WTC11 (cell line): ENCODE measurements at regions of chr12 and their contacts with region 1.

Region 1: GRCh38 chr12:109428037-109428629 is 49.0 kb downstream of the KCTD10 start:
- DNase-seq: peak; percentile 86
- ATAC-seq: peak; percentile 91
- H3K4me3 Mint-ChIP-seq: no peak overlapping the region
- H3K27ac Mint-ChIP-seq: no peak overlapping the region
- H3K4me1 Mint-ChIP-seq: peaks cover 9% of the 10 kb centered on the region
- H3K27me3 Mint-ChIP-seq: 0 out of 2 replicates have a peak, but pooled peaks cover 3% of the 10 kb centered on the region
- CTCF ChIP-seq: peak; percentile 94

Region 2: GRCh38 chr12:109264095-109264942 is 163.8 kb before region 1 on chr12:
- CTCF ChIA-PET with region 1: interaction called, 10 read pairs
- POLR2A ChIA-PET with region 1: no interaction called
- DNase-seq: peak; percentile 95
- ATAC-seq: peak; percentile 90
- H3K4me3 Mint-ChIP-seq: no peak overlapping the region
- H3K27ac Mint-ChIP-seq: no peak overlapping the region
- H3K4me1 Mint-ChIP-seq: peaks cover 10% of the 10 kb centered on the region
- H3K27me3 Mint-ChIP-seq: no peaks in the 10 kb centered on the region
- CTCF ChIP-seq: peak; percentile 58; the same call in 1 of the 2 replicates

Region 3: DNA sequence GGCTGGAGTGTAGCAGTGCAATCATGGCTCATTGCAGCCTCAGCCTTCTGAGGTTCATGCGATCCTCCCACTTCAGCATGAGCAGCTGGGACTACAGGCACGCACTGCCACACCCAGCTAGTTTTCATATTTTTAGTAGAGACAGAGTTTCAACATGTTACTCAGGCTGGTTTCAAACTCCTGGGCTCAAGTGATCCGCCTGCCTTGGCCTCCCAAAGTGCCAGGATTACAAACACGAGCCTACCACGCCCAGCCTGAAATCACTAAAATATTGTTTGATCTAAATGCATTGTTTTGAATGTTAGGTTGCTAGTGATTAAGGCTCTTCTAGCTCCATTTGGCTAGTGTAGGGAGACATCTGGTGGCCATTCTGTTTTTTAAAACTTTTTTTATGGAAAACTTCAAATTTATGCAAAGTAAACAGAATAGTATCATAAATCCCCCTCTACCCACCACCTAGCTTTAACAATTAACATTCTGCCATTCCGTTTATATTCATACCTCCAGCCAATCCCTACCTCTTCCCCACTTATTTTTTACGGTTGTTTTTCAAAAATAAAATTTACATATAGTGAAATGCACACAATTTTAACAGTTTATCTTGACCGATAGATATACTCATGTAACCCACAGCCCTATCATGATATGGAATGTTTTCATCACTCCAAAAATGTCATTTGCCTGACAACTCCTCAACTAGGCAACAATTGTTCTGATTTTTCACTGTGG is 42.6 kb before region 1 on chr12:
- CTCF ChIA-PET with region 1: interaction called, 14 read pairs
- POLR2A ChIA-PET with region 1: no interaction called
- DNase-seq: no peak
- ATAC-seq: no peak
- H3K4me3 Mint-ChIP-seq: no peak overlapping the region
- H3K27ac Mint-ChIP-seq: no peak overlapping the region
- H3K4me1 Mint-ChIP-seq: no peaks in the 10 kb centered on the region
- H3K27me3 Mint-ChIP-seq: peaks cover 9% of the 10 kb centered on the region
- CTCF ChIP-seq: peak; percentile 17; the same call in 1 of the 2 replicates

Region 4: GRCh38 chr12:109393437-109394345 is 34.4 kb before region 1 on chr12:
- CTCF ChIA-PET with region 1: interaction called, 27 read pairs
- POLR2A ChIA-PET with region 1: no interaction called
- DNase-seq: peak; percentile 45
- ATAC-seq: peak; percentile 85
- H3K4me3 Mint-ChIP-seq: no peak overlapping the region
- H3K27ac Mint-ChIP-seq: no peak overlapping the region
- H3K4me1 Mint-ChIP-seq: no peaks in the 10 kb centered on the region
- H3K27me3 Mint-ChIP-seq: peaks cover 2% of the 10 kb centered on the region; the same call in 1 of the 2 replicates
- CTCF ChIP-seq: peak; percentile 64

Region 5: DNA sequence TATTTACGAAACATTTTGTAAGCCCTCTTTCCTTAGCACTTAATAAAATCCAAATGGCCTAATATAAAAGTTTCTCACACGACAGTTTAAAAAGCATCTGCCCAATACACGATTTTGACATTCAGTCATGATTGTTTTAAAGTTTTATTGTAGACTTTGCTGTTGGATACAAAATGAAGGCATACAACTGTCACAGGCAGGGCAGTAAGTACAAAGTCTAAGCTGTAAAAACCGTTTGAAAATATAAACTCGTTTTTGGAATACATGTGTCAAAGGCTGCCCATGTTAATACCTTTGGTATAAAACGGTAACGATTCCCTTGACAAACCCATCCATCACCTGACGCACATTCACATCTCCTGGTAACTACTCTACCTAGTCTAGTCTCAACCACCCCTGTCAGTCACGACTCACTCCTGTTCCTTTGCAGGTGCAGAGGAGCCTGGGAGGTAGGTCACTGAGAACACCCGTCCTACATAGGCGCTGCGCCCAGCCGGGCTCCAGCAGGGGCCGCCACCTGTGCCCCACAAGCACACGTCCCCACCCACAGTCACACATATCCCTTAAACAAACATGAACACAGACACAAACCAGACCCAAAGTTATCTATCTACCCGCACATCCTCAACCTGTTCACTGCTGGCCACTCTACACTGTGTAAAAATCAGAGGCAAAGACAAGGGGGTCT is 21.9 kb after region 1 on chr12:
- CTCF ChIA-PET with region 1: interaction called, 20 read pairs
- POLR2A ChIA-PET with region 1: no interaction called
- DNase-seq: no peak
- ATAC-seq: peak; percentile 72; the same call in 1 of the 2 replicates
- H3K4me3 Mint-ChIP-seq: no peak overlapping the region
- H3K27ac Mint-ChIP-seq: peak overlapping the region; percentile 59
- H3K4me1 Mint-ChIP-seq: no peaks in the 10 kb centered on the region
- H3K27me3 Mint-ChIP-seq: no peaks in the 10 kb centered on the region
- CTCF ChIP-seq: no peak

Region 6: DNA sequence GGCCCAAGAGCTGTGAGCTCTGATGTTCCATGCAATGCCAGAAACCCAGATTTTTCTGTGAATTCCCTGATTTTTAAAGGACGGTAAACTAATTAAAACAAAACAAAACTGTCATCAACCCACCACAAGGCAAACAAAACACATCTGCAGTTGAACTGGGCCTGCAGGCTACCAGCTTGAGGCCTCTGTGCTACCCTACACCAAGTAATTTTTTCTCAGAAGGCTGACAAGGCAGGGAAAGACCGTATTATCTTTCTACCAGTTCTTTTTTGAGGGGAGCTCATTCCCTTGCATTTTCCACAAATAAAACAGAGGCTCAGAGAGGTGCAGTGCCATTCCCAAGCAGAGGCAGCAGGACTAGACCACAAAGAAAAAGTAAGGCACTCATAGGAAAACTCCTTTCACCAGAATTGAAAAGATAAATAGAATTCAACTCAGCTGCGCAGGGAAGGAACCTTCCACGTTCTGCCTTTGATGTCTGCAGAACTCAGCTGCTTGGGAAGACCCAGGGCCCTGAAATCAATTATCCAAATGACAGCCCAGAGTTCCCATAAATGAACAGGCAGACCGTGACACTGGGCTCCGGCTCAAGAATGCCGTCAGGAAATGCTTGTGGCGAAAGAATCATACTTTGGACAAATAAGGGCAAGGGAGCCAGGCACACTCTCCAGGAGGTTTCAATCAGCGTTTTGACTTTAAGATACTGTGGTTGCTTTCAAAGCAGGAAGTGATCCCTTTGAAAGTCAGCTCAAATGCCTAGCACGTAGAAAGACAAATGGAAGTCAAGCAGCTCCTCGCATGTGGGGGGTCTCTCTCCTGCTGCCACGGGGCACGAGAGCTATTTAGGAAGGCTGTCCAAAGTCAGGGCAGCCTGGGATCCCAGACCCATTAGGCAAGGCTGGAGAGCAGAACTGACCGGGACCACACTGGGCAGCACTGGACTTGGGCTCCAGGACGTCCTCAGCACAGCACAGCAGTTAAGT is 34.9 kb after region 1 on chr12:
- CTCF ChIA-PET with region 1: interaction called, 52 read pairs
- POLR2A ChIA-PET with region 1: interaction called, 3 read pairs
- DNase-seq: peak; percentile 31
- ATAC-seq: peak; percentile 6; the same call in 1 of the 2 replicates
- H3K4me3 Mint-ChIP-seq: peak overlapping the region; percentile 39
- H3K27ac Mint-ChIP-seq: peak overlapping the region; percentile 99
- H3K4me1 Mint-ChIP-seq: peaks cover 88% of the 10 kb centered on the region
- H3K27me3 Mint-ChIP-seq: no peaks in the 10 kb centered on the region
- CTCF ChIP-seq: no peak

Region 7: DNA sequence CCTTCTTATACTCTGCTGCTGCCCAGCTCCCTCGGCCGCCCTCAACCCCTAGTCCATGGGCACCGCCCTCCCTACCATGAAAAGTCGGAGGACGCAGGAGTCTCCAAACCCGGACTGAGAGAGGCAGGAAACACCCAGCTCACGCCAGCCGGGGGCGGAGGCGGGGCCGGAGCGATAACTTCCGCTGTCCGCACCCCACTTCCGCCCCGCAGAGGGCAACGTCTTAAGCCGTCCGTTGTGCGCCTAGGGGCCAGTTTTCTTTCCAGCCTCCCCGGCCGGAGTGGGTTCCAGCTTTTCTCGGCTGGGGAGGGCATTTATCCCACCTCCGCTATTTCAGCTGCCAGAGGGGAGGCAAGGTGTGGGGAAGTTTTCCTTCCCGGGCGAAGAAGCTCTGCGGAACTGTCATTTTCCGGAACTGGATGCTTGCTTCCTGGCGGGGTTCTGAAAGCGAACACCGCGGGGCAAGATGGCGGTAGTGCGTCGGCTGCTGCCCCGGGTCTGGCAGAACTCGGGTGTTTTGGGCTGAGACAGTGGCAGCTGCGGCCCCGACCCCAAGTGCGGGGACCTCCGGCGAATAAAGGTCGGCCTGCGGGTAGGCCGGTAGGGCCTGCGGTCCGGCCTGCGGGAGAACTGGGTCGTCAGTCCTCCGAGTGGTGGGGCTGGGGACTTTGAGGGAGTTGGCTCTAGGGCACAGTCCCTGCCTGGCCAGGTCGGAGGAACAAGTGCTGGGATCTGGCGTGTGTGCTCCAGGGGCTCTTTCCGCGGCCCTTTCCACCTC is 49.2 kb after region 1 on chr12 and contains the starts of genes KCTD10 and UBE3B:
- CTCF ChIA-PET with region 1: interaction called, 44 read pairs
- POLR2A ChIA-PET with region 1: interaction called, 3 read pairs
- DNase-seq: peak; percentile 89
- ATAC-seq: peak; percentile 88
- H3K4me3 Mint-ChIP-seq: peak within 1 kb of the TSS; percentile 94
- H3K27ac Mint-ChIP-seq: peak within 1 kb of the TSS; percentile 99
- H3K4me1 Mint-ChIP-seq: peaks cover 30% of the 10 kb centered on the region
- H3K27me3 Mint-ChIP-seq: no peaks in the 10 kb centered on the region
- CTCF ChIP-seq: no peak
- total RNA-seq, gene KCTD10: 35.1 to 44.7 TPM (median 37.6 TPM) in 3 replicates
- total RNA-seq, gene UBE3B: 28.9 to 32.2 TPM (median 29.3 TPM) in 3 replicates

Region 8: GRCh38 chr12:109685574-109686447 is 257.7 kb after region 1 on chr12:
- CTCF ChIA-PET with region 1: no interaction called
- POLR2A ChIA-PET with region 1: no interaction called
- DNase-seq: no peak
- ATAC-seq: no peak
- H3K4me3 Mint-ChIP-seq: no peak overlapping the region
- H3K27ac Mint-ChIP-seq: no peak overlapping the region
- H3K4me1 Mint-ChIP-seq: no peaks in the 10 kb centered on the region
- H3K27me3 Mint-ChIP-seq: peaks cover 26% of the 10 kb centered on the region
- CTCF ChIP-seq: no peak